CD4-positive, alpha-beta T cell (primary cell): ENCODE measurements at regions of chr1 and their contacts with region 1.

Region 1: GRCh38 chr1:27044613-27045151 is 32.0 kb upstream of the TENT5B start:
- DNase-seq: peak; percentile 77 to 95 (median 90)
- ATAC-seq: peak; percentile 93
- H3K4me3 ChIP-seq: peak overlapping the region; percentile 36
- H3K4me3 Mint-ChIP-seq: peak overlapping the region; percentile 39
- H3K27ac ChIP-seq: no peak overlapping the region
- H3K27ac Mint-ChIP-seq: no peak overlapping the region
- H3K4me1 ChIP-seq: peaks cover 20% of the 10 kb centered on the region
- H3K4me1 Mint-ChIP-seq: peaks cover 21% of the 10 kb centered on the region
- H3K27me3 ChIP-seq: no peaks in the 10 kb centered on the region
- H3K27me3 Mint-ChIP-seq: no peaks in the 10 kb centered on the region
- CTCF ChIP-seq: peak; percentile 91

Region 2: DNA sequence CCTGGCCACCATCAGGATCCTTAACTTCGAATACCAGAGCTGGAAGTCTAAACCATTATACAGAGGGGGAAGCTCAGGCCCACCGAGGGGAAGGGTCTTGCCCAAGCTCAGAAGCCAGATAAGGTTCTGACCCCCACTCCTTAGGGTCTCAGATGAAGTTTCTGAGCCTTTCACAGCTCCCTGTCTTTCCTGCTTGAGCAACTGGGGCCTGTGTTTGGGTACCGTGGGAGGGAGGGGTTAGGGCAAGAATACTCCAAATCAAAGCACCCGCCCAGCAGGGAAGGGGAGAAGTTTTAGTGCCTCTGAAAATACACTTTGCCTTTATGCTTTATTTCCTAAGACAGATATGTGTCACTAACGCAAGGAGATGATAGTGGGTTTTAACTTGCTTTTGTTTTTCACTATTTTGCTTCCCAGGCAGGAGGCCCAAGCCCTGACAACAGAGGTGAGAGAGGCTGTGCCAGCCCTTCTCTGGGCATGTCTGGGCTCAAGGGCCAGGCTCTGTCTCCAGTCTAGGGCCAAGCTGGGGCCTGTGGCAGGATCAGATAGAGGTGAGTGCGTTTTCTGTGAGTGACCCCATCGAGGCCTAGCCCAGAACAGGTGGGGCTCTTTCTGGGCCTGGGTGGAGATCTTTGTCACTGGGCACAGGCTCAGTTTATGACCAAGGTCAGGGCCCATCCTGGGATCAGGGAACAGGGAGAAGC is 11.5 kb before region 1 on chr1:
- CTCF ChIA-PET with region 1: interaction called, 11 read pairs
- POLR2A ChIA-PET with region 1: no interaction called
- intact Hi-C with region 1: no loop called
- DNase-seq: no peak
- ATAC-seq: no peak
- H3K4me3 ChIP-seq: no peak overlapping the region
- H3K4me3 Mint-ChIP-seq: no peak overlapping the region
- H3K27ac ChIP-seq: no peak overlapping the region
- H3K27ac Mint-ChIP-seq: no peak overlapping the region
- H3K4me1 ChIP-seq: peaks cover 5% of the 10 kb centered on the region
- H3K4me1 Mint-ChIP-seq: no peaks in the 10 kb centered on the region
- H3K27me3 ChIP-seq: peaks cover 0 to 5% of the 10 kb centered on the region in 2 experiments
- H3K27me3 Mint-ChIP-seq: peaks cover 5% of the 10 kb centered on the region
- CTCF ChIP-seq: no peak

Region 3: GRCh38 chr1:27097484-27097917 is 52.8 kb after region 1 on chr1:
- CTCF ChIA-PET with region 1: interaction called, 24 read pairs
- POLR2A ChIA-PET with region 1: interaction called, 5 read pairs
- intact Hi-C with region 1: loop called (anchors 1 kb)
- DNase-seq: peak; percentile 51 to 86 (median 65)
- ATAC-seq: peak; percentile 96
- H3K4me3 ChIP-seq: no peak overlapping the region
- H3K4me3 Mint-ChIP-seq: no peak overlapping the region
- H3K27ac ChIP-seq: no peak overlapping the region
- H3K27ac Mint-ChIP-seq: no peak overlapping the region
- H3K4me1 ChIP-seq: peaks cover 6% of the 10 kb centered on the region
- H3K4me1 Mint-ChIP-seq: no peaks in the 10 kb centered on the region
- H3K27me3 ChIP-seq: no peaks in the 10 kb centered on the region
- H3K27me3 Mint-ChIP-seq: no peaks in the 10 kb centered on the region
- CTCF ChIP-seq: peak; percentile 95

Region 4: GRCh38 chr1:27192039-27192529 is 147.4 kb after region 1 on chr1:
- CTCF ChIA-PET with region 1: interaction called, 3 read pairs
- POLR2A ChIA-PET with region 1: no interaction called
- intact Hi-C with region 1: loop called in 1 of 2 experiments (anchors 5 kb)
- DNase-seq: peak in 2 of 14 experiments; percentile 15 to 43
- ATAC-seq: no peak
- H3K4me3 ChIP-seq: no peak overlapping the region
- H3K4me3 Mint-ChIP-seq: no peak overlapping the region
- H3K27ac ChIP-seq: no peak overlapping the region
- H3K27ac Mint-ChIP-seq: no peak overlapping the region
- H3K4me1 ChIP-seq: no peaks in the 10 kb centered on the region
- H3K4me1 Mint-ChIP-seq: no peaks in the 10 kb centered on the region
- H3K27me3 ChIP-seq: no peaks in the 10 kb centered on the region
- H3K27me3 Mint-ChIP-seq: no peaks in the 10 kb centered on the region
- CTCF ChIP-seq: no peak

Region 5: DNA sequence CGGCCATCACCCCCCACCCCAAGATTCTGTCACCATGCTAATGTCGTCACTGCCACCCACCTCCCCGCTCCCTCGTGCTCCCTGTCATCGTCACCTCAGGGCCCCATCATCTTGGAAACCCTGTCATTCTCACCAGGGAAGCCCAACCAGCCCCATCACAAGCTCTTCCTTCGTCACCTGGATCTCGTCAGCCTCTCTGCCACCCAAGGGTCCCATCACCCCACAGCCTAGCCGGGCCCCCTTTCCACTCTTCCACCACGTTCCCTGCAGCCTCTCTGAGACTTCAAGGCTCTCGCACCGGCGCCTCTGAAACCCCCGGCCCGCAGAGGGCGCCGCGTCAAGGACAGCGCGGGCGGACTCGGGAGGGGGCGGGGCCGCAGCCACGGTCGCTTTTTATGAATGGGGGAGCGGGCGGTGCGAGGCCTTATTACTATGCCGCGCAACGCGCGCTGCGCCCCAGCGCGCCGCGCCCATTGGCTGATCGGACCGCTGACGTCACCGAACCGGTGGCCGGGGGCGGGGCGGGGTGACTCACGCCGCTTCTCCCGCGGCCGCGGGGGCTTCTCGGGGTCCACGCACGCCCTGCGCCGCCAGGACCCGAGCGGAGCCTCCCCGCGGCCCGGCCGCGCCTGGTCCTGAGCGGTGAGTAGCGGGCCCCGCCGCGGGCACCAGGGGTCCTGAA is 347.6 kb after region 1 on chr1 and contains the start of gene GPR3:
- CTCF ChIA-PET with region 1: interaction called, 3 read pairs
- POLR2A ChIA-PET with region 1: no interaction called
- intact Hi-C with region 1: loop called in 1 of 2 experiments (anchors 5 kb)
- DNase-seq: peak; percentile 88 to 97 (median 92)
- ATAC-seq: peak; percentile 89
- H3K4me3 ChIP-seq: peak within 1 kb of the TSS; percentile 45
- H3K4me3 Mint-ChIP-seq: peak within 1 kb of the TSS; percentile 77
- H3K27ac ChIP-seq: no peak within 1 kb of the TSS
- H3K27ac Mint-ChIP-seq: peak within 1 kb of the TSS; percentile 57
- H3K4me1 ChIP-seq: peaks cover 36% of the 10 kb centered on the region
- H3K4me1 Mint-ChIP-seq: peaks cover 26% of the 10 kb centered on the region
- H3K27me3 ChIP-seq: no peaks in the 10 kb centered on the region
- H3K27me3 Mint-ChIP-seq: peaks cover 3% of the 10 kb centered on the region
- CTCF ChIP-seq: peak; percentile 71
- total RNA-seq, gene GPR3: 0.14 to 0.19 TPM